ENCODE measurements at regions of chr15 and their contacts with region 1.

Region 1: GRCh38 chr15:91249591-91249990 is 149.5 kb downstream of the SV2B start:
- DNase-seq: no peak
- ATAC-seq: no peak
- H3K4me3 ChIP-seq: no peak overlapping the region
- H3K27ac ChIP-seq: no peak overlapping the region
- H3K4me1 ChIP-seq: no peaks in the 10 kb centered on the region
- H3K27me3 ChIP-seq: peaks cover 9% of the 10 kb centered on the region
- CTCF ChIP-seq: no peak

Region 2: DNA sequence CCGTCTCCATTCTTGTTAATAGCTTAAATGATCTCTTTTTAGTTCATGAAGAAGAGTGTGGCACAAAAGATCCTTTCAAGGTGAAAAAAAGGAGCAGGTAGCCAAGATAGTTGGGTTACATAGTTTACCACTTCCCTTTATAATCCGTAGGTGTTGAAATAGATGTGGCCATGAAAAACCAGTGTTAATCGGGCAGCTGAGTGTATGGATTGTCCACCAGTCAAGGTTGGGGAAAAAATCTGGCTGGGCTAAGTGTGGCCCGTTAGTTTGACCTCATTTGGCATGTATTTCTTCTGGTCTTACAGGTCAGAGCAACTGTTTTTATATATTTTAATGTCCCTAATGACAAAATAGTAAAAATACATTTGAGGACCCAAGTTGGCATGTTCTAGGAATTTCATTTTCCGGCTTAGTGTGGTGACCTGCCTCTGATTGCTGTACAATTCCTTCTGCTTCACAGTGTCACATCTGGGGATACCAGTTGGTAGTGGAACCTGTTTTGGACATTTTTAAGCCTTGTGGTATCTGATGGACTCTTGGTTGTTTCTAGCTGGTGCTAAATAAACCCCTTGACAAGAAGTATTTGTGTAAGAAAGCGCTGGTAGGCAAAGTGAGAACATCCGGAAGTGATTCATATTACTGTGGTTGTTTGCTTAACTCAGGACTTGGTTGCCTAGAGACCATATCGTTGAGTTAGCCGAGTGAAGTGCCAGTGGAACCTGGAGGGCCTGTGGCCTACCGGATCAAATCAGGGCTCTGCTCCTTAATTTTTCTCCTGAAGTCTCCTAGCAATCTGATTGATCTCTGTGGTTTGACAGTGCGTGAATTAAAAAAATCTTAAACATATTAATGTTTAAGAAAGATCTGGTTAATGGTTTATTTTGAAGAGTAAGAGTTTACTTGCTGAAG is 848.9 kb before region 1 on chr15:
- CTCF ChIA-PET with region 1: no interaction called
- POLR2A ChIA-PET with region 1: interaction called, 12 read pairs
- in situ Hi-C with region 1: no loop called
- intact Hi-C with region 1: no loop called
- DNase-seq: peak; percentile 93
- ATAC-seq: peak; percentile 96
- H3K4me3 ChIP-seq: peak overlapping the region; percentile 21 to 46
- H3K27ac ChIP-seq: peak overlapping the region; percentile 98
- H3K4me1 ChIP-seq: peaks cover 74% of the 10 kb centered on the region
- H3K27me3 ChIP-seq: no peaks in the 10 kb centered on the region
- CTCF ChIP-seq: no peak

Region 3: DNA sequence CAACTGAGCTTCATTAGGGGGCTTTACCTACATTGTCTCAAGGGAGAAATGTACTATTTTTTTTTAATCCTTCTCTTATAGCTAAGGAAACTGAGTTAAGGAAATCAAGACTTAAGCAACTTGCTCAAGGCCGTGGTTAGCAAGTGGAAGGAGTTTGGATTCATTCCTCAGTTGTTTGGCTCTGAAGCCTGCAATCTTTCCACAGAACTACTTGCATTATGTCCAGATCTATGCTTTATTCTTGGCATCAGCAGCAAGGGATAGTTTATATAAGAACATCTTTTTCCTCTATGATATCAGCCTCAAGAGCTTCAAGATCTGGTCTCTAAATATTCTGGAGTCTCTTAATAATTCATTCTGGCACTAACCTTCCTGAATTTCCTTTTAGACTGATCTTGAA is 32.9 kb after region 1 on chr15:
- CTCF ChIA-PET with region 1: interaction called, 12 read pairs
- POLR2A ChIA-PET with region 1: no interaction called
- in situ Hi-C with region 1: no loop called
- intact Hi-C with region 1: no loop called
- DNase-seq: no peak
- ATAC-seq: no peak
- H3K4me3 ChIP-seq: no peak overlapping the region
- H3K27ac ChIP-seq: no peak overlapping the region
- H3K4me1 ChIP-seq: no peaks in the 10 kb centered on the region
- H3K27me3 ChIP-seq: peaks cover 14% of the 10 kb centered on the region
- CTCF ChIP-seq: no peak

Region 4: GRCh38 chr15:91357011-91357410 is 107.4 kb after region 1 on chr15:
- CTCF ChIA-PET with region 1: no interaction called
- POLR2A ChIA-PET with region 1: no interaction called
- in situ Hi-C with region 1: no loop called
- intact Hi-C with region 1: no loop called
- DNase-seq: no peak
- ATAC-seq: no peak
- H3K4me3 ChIP-seq: no peak overlapping the region
- H3K27ac ChIP-seq: no peak overlapping the region
- H3K4me1 ChIP-seq: no peaks in the 10 kb centered on the region
- H3K27me3 ChIP-seq: no peaks in the 10 kb centered on the region; the same call in 1 of the 2 replicates
- CTCF ChIP-seq: no peak

Region 5: GRCh38 chr15:92383519-92384326 is 1134.1 kb after region 1 on chr15:
- CTCF ChIA-PET with region 1: interaction called, 10 read pairs
- POLR2A ChIA-PET with region 1: no interaction called
- in situ Hi-C with region 1: no loop called
- intact Hi-C with region 1: no loop called
- DNase-seq: no peak
- ATAC-seq: no peak
- H3K4me3 ChIP-seq: no peak overlapping the region
- H3K27ac ChIP-seq: no peak overlapping the region
- H3K4me1 ChIP-seq: no peaks in the 10 kb centered on the region
- H3K27me3 ChIP-seq: peaks cover 19% of the 10 kb centered on the region
- CTCF ChIP-seq: peak; percentile 86